K562 (cell line): ENCODE measurements at regions of chr2 and their contacts with region 1.

Region 1: GRCh38 chr2:10302479-10303180 is at the start of gene HPCAL1:
- DNase-seq: peak; percentile 94 to 97 (median 96)
- ATAC-seq: peak; percentile 95
- H3K4me3 ChIP-seq: peak within 1 kb of the TSS; percentile 80
- H3K27ac ChIP-seq: peak within 1 kb of the TSS; percentile 94
- H3K4me1 ChIP-seq: peaks cover 51 to 56% of the 10 kb centered on the region in 2 experiments
- H3K27me3 ChIP-seq: no peaks in the 10 kb centered on the region
- CTCF ChIP-seq: peak; percentile 67 to 87 (median 78)
- EP300 ChIP-seq: peak; percentile 36
- POLR2A ChIP-seq: peak; percentile 36; the same call in 1 of the 2 replicates
- RAD21 ChIP-seq: peak; percentile 52 to 67
- polyA plus RNA-seq, gene HPCAL1: 2.7 to 3.1 TPM

Region 2: DNA sequence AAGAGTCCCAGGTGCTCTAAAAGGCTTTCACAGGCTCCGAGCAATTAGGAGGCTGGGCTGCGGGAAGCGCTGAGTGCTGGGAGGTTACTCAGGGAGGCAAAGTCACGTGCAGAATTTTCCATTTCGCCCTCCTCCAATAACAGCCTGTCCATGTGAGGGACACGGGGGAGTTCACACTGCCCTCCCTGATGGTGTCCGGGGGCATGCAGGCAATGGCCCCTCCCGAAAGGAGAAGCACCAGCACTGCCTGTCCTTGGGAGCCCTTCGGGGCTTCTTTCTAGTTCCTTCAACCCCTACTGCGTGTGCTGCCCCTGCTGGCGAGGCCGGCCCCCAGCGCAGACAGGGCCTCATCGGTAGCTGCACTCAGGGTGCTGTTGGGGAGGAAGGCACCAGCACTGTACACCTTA is 63.1 kb before region 1 on chr2:
- CTCF ChIA-PET with region 1: no interaction called
- POLR2A ChIA-PET with region 1: no interaction called
- in situ Hi-C with region 1: no loop called
- intact Hi-C with region 1: loop called (anchors 10 kb)
- DNase-seq: peak; percentile 56 to 74 (median 69)
- ATAC-seq: peak; percentile 94
- H3K4me3 ChIP-seq: no peak overlapping the region
- H3K27ac ChIP-seq: no peak overlapping the region
- H3K4me1 ChIP-seq: peaks cover 0 to 39% of the 10 kb centered on the region in 2 experiments; a peak in 3 of 5 replicates
- H3K27me3 ChIP-seq: peaks cover 19 to 47% of the 10 kb centered on the region in 2 experiments; a peak in 4 of 5 replicates
- CTCF ChIP-seq: peak; percentile 58 to 83 (median 72)
- EP300 ChIP-seq: no peak
- POLR2A ChIP-seq: no peak
- RAD21 ChIP-seq: peak in 1 of 2 experiments; percentile 34; a peak in 2 of 4 replicates

Region 3: DNA sequence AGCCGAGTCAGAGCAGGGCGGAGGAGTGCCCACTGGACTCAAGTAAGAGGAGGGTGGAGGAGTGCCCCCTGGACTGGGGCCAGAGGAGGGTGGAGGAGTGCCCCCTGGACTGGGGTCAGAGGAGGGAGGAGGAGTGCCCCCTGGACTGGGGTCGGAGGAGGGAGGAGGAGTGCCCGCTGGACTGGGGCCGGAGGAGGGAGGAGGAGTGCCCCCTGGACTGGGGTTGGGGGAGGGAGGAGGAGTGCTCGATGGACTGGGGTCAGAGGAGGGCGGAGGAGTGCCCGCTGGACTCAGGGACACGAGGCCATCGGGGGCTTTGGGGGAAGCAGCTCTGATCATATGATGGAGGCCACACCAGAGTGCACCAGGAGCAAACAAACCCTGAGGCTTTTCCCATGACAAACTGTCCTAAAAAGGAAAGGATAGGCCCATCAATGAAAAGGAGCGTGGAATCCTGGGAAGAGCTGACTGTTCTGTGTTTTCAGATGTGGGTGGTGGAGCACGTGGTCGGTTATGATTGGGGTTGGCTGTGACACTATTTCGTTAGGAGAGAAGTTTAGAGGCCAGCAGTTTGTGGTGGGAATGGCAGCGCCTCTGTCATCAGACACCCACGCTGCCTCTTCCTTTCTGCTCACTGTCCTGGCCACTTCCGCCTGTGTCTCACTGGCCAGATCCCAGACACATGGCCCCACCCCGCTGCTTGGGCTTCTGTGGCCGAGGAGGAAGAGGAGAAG is 24.4 kb before region 1 on chr2:
- CTCF ChIA-PET with region 1: no interaction called
- POLR2A ChIA-PET with region 1: interaction called, 5 read pairs
- in situ Hi-C with region 1: no loop called
- intact Hi-C with region 1: loop called (anchors 2 kb)
- DNase-seq: peak; percentile 84 to 91 (median 86)
- ATAC-seq: peak; percentile 76
- H3K4me3 ChIP-seq: no peak overlapping the region
- H3K27ac ChIP-seq: peak overlapping the region; percentile 74
- H3K4me1 ChIP-seq: peaks cover 55 to 57% of the 10 kb centered on the region in 2 experiments
- H3K27me3 ChIP-seq: no peaks in the 10 kb centered on the region
- CTCF ChIP-seq: no peak
- EP300 ChIP-seq: peak; percentile 46; the same call in 1 of the 2 replicates
- POLR2A ChIP-seq: no peak
- RAD21 ChIP-seq: peak in 1 of 2 experiments; percentile 11; a peak in 1 of 4 replicates

Region 4: GRCh38 chr2:10316336-10316735 is 13.7 kb after region 1 on chr2:
- CTCF ChIA-PET with region 1: interaction called, 3 read pairs
- POLR2A ChIA-PET with region 1: interaction called, 26 read pairs
- in situ Hi-C with region 1: no loop called
- intact Hi-C with region 1: no loop called
- DNase-seq: no peak
- ATAC-seq: no peak
- H3K4me3 ChIP-seq: no peak overlapping the region
- H3K27ac ChIP-seq: no peak overlapping the region
- H3K4me1 ChIP-seq: peaks cover 16 to 23% of the 10 kb centered on the region in 2 experiments; a peak in 4 of 5 replicates
- H3K27me3 ChIP-seq: no peaks in the 10 kb centered on the region; a peak in 1 of 5 replicates
- CTCF ChIP-seq: no peak
- EP300 ChIP-seq: no peak
- POLR2A ChIP-seq: no peak
- RAD21 ChIP-seq: no peak

Region 5: GRCh38 chr2:10331027-10331701 is 28.5 kb after region 1 on chr2:
- CTCF ChIA-PET with region 1: no interaction called
- POLR2A ChIA-PET with region 1: interaction called, 4 read pairs
- in situ Hi-C with region 1: no loop called
- intact Hi-C with region 1: loop called (anchors 2 kb)
- DNase-seq: peak; percentile 58 to 71 (median 66)
- ATAC-seq: peak; percentile 70
- H3K4me3 ChIP-seq: no peak overlapping the region
- H3K27ac ChIP-seq: peak overlapping the region; percentile 83; the same call in 2 of the 3 replicates
- H3K4me1 ChIP-seq: peaks cover 52 to 72% of the 10 kb centered on the region in 2 experiments
- H3K27me3 ChIP-seq: no peaks in the 10 kb centered on the region
- CTCF ChIP-seq: peak in 1 of 3 experiments; percentile 28; a peak in 2 of 6 replicates
- EP300 ChIP-seq: no peak
- POLR2A ChIP-seq: no peak
- RAD21 ChIP-seq: peak; percentile 15 to 24; a peak in 2 of 4 replicates

Region 6: DNA sequence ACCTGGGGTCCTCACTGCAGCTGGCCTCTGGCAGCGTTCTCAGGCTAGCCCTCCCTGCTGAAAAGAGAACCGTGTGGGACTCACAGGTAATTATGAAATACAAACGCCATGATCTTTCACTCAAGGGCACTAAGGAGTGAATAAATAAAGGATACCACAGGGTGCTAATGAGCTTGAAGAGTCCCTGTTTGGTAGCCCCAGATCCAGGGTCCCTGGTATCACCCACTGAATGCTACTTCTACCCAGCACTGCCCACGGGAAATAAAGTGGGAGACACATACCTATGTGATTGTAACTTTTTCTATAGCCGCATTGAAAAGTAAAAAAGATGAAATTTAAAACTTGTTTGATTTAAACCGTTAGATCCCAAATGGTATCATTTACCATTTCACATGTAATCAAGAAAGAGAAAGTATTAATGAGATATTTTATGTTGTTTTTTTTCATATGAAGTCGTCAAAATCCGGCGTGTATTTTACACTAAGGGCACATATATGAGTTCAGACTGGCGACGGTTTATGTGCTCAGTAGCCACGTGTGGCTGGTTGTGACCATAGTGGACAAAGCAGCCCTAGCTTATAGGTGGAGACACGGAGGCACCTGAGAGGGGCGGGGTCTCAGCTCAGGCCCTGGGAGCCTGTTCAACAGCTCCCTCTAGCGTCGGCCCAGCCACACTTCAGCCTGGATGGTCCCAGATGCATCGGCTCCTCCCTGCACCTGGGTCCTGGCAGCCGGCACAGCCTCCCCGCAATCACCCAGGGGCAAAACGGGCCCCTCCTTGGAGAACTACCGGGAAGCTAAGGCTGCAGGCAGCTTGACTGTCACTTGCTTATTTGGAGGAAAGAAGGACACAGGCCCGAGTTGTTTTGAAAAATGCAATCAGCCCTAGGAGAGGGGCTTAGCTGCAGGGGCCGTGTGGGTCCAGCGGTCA is 106.3 kb after region 1 on chr2:
- CTCF ChIA-PET with region 1: interaction called, 5 read pairs
- POLR2A ChIA-PET with region 1: interaction called, 3 read pairs
- in situ Hi-C with region 1: no loop called
- intact Hi-C with region 1: loop called (anchors 2 kb)
- DNase-seq: peak; percentile 90 to 94 (median 93)
- ATAC-seq: peak; percentile 89
- H3K4me3 ChIP-seq: no peak overlapping the region
- H3K27ac ChIP-seq: peak overlapping the region; percentile 81
- H3K4me1 ChIP-seq: peaks cover 17 to 38% of the 10 kb centered on the region in 2 experiments; a peak in 4 of 5 replicates
- H3K27me3 ChIP-seq: no peaks in the 10 kb centered on the region
- CTCF ChIP-seq: peak; percentile 94 to 97 (median 97)
- EP300 ChIP-seq: peak; percentile 8; the same call in 1 of the 2 replicates
- POLR2A ChIP-seq: no peak
- RAD21 ChIP-seq: peak; percentile 93 to 96